Right ventricle myocardium inferior (tissue), 1 donor: ENCODE measurements at regions of chr15 and their contacts with region 1.

Region 1: GRCh38 chr15:88454867-88455810 is 12.0 kb downstream of the MRPL46 start:
- DNase-seq: no peak
- ATAC-seq: peak; percentile 73

Region 2: GRCh38 chr15:88262064-88262463 is 193.1 kb before region 1 on chr15:
- intact Hi-C with region 1: loop called (anchors 5 kb)
- DNase-seq: no peak
- ATAC-seq: no peak

Region 3: GRCh38 chr15:88440021-88440420 is 15.1 kb before region 1 on chr15:
- intact Hi-C with region 1: no loop called
- DNase-seq: no peak
- ATAC-seq: no peak

Region 4: DNA sequence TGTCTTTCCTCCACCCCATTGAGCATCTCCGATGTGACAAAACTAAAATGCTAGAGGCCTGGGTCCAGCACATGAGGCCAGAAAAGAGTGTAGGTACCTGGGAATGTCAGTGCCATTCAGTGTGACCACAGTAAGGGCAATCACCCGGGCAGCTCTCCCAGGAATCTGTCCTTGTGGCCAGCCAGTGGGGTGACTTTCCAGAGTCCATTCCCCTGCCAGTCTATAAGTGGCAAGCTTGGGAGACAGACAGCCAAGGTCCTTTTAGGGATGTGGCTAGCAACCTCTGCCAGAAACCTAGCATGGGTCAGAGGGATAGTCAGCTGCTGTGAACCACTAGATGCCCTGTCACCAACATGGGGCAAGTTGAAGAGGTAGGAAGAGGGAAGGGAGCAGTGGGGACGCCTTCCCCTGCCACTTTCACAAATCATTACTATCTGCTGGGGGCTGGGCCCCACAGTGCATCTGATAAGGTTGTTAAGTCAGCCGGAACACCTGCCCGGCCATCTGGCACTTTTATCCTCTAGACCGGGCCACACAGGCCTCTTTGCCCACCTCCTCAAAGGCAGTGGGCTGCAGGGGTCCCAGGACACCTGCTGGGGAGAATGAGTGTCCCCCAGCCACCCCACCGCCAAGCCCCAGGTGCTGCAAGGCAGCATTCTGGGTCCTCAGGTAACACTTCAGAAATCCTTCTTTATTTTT is 116.2 kb after region 1 on chr15:
- intact Hi-C with region 1: no loop called
- DNase-seq: no peak
- ATAC-seq: peak; percentile 90